AG04450 (cell line): ENCODE measurements at regions of chr5 and their contacts with region 1.

Region 1: DNA sequence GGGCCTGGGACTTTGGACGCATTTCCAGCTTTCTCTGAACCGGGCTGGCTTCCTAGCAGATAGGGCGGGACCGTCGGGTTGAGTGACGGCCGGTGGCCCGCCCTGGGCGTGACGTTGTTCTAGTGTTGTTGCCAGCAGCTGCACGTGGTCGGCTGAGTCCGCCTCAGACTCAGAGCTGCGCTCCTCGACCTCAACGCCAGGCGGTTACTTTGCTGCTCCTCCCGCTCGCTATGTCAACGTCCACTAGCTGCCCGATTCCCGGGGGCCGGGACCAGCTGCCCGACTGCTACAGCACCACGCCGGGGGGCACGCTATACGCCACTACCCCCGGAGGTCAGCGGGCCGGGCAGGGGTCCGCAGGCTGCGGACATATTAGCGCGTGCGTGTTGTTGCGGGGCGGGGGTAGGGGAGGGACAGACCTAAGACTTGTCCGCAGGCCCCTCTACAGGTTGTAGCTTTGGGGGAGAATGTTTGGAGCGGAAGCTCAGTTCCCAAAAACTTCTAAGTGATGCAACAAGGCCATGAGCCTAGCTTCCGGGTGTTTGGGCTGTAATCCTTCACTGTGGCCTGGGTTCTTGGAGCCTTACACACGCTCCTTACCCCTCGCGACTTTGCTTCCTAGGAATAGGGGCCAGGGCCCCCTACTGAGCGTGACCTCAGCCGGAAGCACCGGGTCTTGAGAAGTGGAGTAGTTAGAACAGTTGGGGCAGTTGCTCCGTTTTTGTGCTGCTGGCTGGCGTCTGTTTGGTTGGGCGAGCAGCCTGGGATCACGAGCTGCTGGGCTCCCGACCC is at the start of gene EIF4EBP3:
- DNase-seq: peak; percentile 90
- H3K4me3 ChIP-seq: peak within 1 kb of the TSS; percentile 49
- H3K27ac ChIP-seq: peak within 1 kb of the TSS; percentile 93
- H3K27me3 ChIP-seq: no peaks in the 10 kb centered on the region
- CTCF ChIP-seq: peak; percentile 63
- polyA plus RNA-seq, gene EIF4EBP3: 1.7 and 2.8 TPM in 2 replicates

Region 2: DNA sequence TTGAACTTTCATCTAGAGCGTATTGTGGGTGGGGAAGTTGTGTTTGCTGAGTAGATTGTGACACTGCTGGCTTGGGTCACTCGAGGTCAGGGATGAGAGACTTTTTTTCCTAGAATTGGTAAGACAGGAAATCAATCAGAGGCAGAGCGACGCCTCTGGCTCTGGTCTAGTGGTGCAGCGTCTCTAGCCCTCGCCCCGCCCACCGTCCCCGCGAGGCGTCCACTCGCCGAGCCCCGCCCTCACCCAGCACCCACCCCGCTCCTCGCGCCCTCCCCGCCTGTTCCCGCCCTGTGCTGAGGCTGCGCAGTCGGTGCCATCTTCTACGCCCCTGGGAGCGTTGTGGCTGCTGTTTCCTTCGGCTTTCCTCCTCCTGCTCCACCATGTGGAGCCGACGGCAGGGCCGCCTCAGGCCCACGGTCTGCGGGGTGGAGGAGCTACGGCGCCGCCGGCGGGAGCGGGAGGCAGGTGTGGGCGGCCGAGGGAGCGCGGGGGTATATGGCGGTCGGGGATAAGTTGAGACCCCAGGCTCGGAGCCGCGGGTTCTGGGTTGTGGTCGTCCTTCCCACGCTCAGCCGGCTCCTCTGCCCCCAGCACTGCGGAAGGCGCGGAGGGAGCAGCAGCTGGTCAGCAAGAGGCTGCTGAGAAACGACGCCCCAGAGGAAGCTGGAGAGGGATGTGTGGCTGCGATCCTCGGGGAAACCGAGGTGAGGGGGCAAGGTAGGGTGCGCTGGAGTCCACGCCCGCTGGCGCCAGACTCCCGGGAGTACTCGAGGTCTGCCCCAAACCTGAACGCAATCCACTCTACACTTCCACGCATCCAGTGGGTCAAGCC is 91.7 kb after region 1 on chr5 and contains the start of gene TMCO6:
- CTCF ChIA-PET with region 1: interaction called, 19 read pairs
- POLR2A ChIA-PET with region 1: interaction called, 10 read pairs
- DNase-seq: peak; percentile 74
- H3K4me3 ChIP-seq: peak within 1 kb of the TSS; percentile 82
- H3K27ac ChIP-seq: peak within 1 kb of the TSS; percentile 68
- H3K27me3 ChIP-seq: no peaks in the 10 kb centered on the region
- CTCF ChIP-seq: peak; percentile 58
- polyA plus RNA-seq, gene TMCO6: 5.0 and 5.7 TPM in 2 replicates